Mammary epithelial cell (primary cell): ENCODE measurements at regions of chr1 and their contacts with region 1.

Region 1: DNA sequence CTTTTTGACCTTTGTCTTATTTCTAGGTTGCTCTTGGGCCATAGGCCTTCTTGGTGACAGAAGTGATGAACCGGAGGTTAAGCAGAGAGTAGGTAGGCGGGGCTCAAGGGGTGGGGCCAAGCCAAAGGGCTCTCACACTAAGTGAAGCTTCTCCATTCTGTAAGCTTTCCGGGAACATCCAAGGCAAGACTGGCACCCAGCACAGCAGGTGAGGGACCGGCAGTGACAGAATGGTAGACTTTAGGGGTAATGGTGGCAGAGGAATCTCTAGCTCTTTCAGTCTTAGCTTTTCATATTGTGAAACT is at the start of gene TNFAIP8L2:
- DNase-seq: no peak
- H3K4me3 ChIP-seq: no peak within 1 kb of the TSS
- H3K27ac ChIP-seq: no peak within 1 kb of the TSS
- H3K4me1 ChIP-seq: peaks cover 3% of the 10 kb centered on the region
- H3K27me3 ChIP-seq: no peaks in the 10 kb centered on the region
- CTCF ChIP-seq: no peak
- total RNA-seq, gene TNFAIP8L2: not detected

Region 2: GRCh38 chr1:150979092-150980056 is 177.1 kb before region 1 on chr1:
- CTCF ChIA-PET with region 1: no interaction called
- dilution Hi-C with region 1: no loop called
- in situ Hi-C with region 1: no loop called
- intact Hi-C with region 1: loop called (anchors 1 kb)
- DNase-seq: peak; percentile 73
- H3K4me3 ChIP-seq: no peak overlapping the region
- H3K27ac ChIP-seq: no peak overlapping the region
- H3K4me1 ChIP-seq: peaks cover 47% of the 10 kb centered on the region
- H3K27me3 ChIP-seq: no peaks in the 10 kb centered on the region
- CTCF ChIP-seq: peak; percentile 100

Region 3: DNA sequence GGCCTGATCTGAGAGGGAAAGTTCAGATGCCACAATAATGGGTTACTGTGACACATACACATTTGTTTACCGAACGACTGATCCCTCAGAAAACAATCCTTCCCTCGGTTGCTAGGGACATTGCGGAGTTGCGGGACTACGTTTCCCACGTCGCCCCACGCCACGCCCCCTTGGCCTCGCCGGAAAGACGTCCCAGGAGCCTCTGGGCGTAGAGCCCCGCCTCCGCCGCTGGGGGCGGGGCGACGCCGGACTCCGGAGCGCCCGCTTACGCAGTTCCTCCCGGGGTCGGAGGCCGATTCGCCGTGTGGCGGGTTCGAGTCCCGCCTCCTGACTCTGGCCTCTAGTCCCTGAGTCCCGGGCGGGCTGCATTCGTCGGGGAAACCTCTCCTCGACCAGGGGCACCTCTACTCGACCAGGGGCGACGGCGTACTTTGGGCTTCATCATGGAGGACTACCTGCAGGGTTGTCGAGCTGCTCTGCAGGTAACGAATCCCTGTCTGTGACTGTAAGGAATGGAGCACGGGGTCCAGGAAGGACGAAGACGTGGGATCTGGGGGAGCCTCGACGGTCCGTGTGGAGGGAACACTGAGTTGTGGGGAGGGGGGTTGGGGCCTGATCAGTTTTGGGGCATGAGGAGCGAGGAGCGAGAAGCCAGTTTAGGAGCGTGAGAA is 148.1 kb before region 1 on chr1 and contains the start of gene PRUNE1:
- CTCF ChIA-PET with region 1: interaction called, 3 read pairs
- dilution Hi-C with region 1: no loop called
- in situ Hi-C with region 1: no loop called
- intact Hi-C with region 1: loop called (anchors 5 kb)
- DNase-seq: peak; percentile 93
- H3K4me3 ChIP-seq: peak within 1 kb of the TSS; percentile 78 to 93 (median 80)
- H3K27ac ChIP-seq: peak within 1 kb of the TSS; percentile 97
- H3K4me1 ChIP-seq: peaks cover 47% of the 10 kb centered on the region
- H3K27me3 ChIP-seq: no peaks in the 10 kb centered on the region
- CTCF ChIP-seq: no peak
- total RNA-seq, gene PRUNE1: 9.4 to 16.3 TPM

Region 4: GRCh38 chr1:151024540-151025146 is 131.8 kb before region 1 on chr1:
- CTCF ChIA-PET with region 1: no interaction called
- dilution Hi-C with region 1: no loop called
- in situ Hi-C with region 1: no loop called
- intact Hi-C with region 1: loop called (anchors 1 kb)
- DNase-seq: peak; percentile 46
- H3K4me3 ChIP-seq: no peak overlapping the region
- H3K27ac ChIP-seq: no peak overlapping the region
- H3K4me1 ChIP-seq: no peaks in the 10 kb centered on the region
- H3K27me3 ChIP-seq: no peaks in the 10 kb centered on the region
- CTCF ChIP-seq: peak; percentile 77 to 86

Region 5: GRCh38 chr1:151070474-151071276 is 85.8 kb before region 1 on chr1 and contains the start of gene GABPB2:
- CTCF ChIA-PET with region 1: no interaction called
- dilution Hi-C with region 1: no loop called
- in situ Hi-C with region 1: no loop called
- intact Hi-C with region 1: loop called (anchors 1 kb)
- DNase-seq: peak; percentile 93
- H3K4me3 ChIP-seq: peak within 1 kb of the TSS; percentile 76 to 95 (median 84)
- H3K27ac ChIP-seq: peak within 1 kb of the TSS; percentile 91
- H3K4me1 ChIP-seq: peaks cover 12% of the 10 kb centered on the region
- H3K27me3 ChIP-seq: no peaks in the 10 kb centered on the region
- CTCF ChIP-seq: peak; percentile 62 to 94
- total RNA-seq, gene GABPB2: 9.2 to 10.7 TPM

Region 6: GRCh38 chr1:151098126-151098525 is 58.3 kb before region 1 on chr1:
- CTCF ChIA-PET with region 1: interaction called, 6 read pairs
- dilution Hi-C with region 1: loop called (anchors 5 kb)
- in situ Hi-C with region 1: loop called in 1 of 2 experiments (anchors 10 kb)
- intact Hi-C with region 1: loop called (anchors 1 kb)
- DNase-seq: no peak
- H3K4me3 ChIP-seq: no peak overlapping the region
- H3K27ac ChIP-seq: no peak overlapping the region
- H3K4me1 ChIP-seq: peaks cover 2% of the 10 kb centered on the region
- H3K27me3 ChIP-seq: no peaks in the 10 kb centered on the region
- CTCF ChIP-seq: no peak